ENCODE measurements at regions of chr13 and their contacts with region 1.

Region 1: DNA sequence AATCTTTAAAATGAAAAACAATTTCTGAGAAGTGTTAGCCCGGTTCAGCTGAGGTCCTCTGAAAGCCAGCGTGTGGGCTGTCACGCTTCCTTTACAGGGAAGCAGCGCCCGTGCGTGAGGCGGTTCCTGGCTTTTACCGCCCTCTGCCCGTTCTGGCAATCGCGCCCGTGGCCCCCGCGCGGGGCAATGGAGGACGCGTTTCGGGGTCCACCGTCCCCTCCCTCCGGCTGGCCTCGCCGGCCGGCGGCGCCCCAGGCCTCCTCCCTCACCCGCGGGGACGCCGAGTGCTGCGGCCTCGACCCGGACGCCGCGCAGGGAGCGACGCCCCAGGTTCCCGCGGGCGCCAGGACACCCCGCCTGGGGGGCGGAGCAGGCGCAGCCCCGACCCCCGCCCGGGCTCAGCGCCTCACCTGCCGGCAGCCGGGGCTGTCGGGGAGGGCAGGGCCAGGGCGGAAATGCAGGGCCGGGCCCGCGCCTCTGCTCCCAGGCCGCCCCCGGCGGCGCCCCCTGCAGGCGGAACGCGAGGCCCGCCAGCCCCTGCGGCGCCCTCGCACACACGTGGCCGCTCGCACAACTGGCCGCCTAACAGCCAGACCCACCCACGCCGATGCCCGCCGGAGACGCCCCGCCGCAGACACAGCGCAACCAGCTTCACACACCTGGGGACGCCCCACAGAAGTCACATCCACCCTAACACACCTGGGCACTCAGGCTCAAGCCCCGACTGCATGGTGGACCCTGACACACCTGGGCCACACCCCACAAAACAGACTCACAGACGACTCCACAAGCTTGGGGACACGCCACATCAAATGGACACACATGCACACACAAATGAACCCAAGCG is at the start of gene GGACT:
- DNase-seq: no peak
- H3K4me3 ChIP-seq: peak within 1 kb of the TSS; percentile 68
- CTCF ChIP-seq: peak; percentile 69

Region 2: DNA sequence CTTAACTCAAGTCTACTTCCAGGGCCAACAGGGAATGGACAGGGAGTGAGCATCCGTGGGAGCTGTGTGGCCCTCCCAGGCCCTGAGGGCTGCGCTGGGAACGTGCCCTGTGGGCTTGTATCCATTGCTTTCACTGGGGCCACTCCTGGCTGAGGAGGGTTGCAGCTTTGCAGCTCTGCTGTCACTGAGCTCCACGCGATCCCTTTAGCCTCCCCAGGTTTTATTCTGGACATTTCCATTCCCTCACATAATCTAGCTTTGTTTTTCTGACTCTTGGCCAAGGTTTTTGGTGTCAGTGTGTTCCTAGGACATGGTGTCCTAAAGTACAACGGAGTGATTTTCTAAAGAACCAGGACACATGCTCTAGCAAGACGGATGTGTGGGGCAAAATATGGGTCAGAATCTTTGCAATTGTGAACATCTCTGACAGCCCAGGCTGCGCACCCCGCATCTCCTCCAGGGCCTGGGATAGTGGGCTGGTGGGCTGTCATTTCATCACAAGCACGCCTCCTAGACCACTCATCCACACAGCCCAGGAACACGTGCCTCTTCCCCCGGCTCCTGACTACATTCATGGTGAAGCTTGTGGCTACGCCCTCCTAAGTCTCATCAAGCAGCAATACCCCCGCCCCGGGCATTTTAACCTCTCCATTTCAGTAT is 27.9 kb before region 1 on chr13:
- CTCF ChIA-PET with region 1: interaction called, 12 read pairs
- POLR2A ChIA-PET with region 1: no interaction called
- DNase-seq: no peak
- H3K4me3 ChIP-seq: no peak overlapping the region
- CTCF ChIP-seq: no peak

Region 3: DNA sequence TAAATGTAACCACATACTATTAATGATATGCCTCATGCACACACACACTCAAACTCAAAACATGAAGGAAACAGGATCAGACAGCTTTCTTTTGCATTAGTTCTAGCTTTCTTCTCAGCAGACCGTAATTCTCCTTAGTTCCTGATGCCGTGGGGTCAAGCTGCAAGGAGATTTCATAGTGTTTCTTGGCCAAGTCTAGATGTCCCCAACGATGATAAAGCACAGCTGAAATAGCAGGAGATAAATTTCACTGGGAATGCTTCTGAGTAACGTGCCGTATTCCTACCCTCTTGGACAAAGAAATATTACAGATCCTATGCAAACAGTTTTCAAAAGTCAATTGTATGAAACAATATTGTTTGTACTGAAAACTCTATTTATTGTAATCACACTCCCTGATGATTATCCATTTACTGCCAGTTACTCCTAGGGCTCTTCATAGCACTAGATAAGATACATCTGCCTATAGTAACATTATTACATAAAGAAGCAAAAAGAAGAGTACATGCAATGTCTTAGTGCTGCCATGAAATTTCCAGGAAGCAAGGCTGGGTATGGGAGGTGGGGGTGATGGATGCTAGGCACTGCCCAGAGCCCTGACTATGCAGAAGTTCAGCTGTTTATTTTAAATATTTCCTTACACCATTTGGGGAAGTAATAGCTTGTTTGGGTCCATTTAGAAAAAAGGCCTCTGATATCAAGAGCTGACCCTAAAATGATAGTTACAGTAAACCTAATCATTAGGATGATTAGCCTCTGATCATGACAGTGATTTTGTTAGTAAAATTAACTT is 16.6 kb after region 1 on chr13:
- CTCF ChIA-PET with region 1: interaction called, 26 read pairs
- POLR2A ChIA-PET with region 1: no interaction called
- DNase-seq: no peak
- H3K4me3 ChIP-seq: no peak overlapping the region
- CTCF ChIP-seq: no peak

Region 4: DNA sequence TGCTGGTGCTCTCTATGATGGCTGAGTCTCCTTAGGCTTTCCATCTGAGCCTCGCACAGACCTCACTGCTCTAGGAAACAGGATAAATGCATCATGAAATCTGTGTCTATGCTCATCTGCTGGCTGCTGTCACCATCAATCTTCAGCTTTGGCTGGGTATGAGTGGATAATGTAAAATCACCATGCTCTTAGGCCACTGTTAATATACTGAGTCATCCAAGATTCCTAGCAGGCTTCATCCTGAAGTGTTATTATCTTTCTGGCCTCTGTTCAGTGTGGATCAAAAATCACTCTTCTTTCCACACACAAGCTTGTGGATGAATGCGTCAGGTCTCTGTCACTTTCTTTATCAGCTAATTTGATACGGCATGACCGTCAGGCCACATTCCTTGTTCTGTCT is 510.3 kb after region 1 on chr13:
- CTCF ChIA-PET with region 1: no interaction called
- POLR2A ChIA-PET with region 1: no interaction called
- DNase-seq: no peak
- H3K4me3 ChIP-seq: no peak overlapping the region
- CTCF ChIP-seq: no peak